Motor neuron (in vitro differentiated cells): ENCODE measurements at regions of chr9 and their contacts with region 1.

Region 1: DNA sequence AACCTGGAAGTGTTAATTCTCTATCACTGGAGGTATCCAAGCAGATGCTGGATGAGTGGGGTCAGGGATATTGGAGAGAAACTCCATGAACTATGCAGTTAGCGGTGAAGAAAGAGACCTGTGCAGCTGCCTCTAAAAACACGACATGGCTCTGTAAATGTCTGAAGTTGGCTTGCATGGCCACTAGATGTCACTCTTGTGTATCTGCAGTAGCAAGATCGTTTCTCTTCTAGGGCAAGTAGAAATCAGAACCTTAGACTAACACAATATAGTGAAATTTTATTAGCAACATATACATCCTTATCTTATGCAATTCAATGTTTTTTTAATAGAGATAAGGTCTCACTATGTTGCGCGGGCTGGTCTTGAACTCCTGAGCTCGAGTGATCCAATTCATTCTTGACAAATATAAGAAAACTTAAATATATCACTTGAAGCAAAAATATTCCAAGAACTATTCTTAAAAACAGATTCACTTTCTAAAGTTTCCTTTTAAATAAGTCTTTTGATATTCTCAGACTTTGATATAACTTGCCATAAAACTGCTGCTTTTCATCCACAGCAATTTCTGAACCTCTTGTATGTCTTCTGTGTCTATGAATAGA is 2.9 kb downstream of the OR2S2 start:
- ATAC-seq: peak; percentile 60 to 96 (median 82)
- H3K4me3 ChIP-seq: no peak overlapping the region
- H3K27ac ChIP-seq: no peak overlapping the region
- H3K4me1 ChIP-seq: no peaks in the 10 kb centered on the region

Region 2: GRCh38 chr9:36102742-36103495 is 147.9 kb after region 1 on chr9:
- in situ Hi-C with region 1: loop called in 1 of 9 experiments (anchors 25 kb)
- ATAC-seq: peak; percentile 69 to 99 (median 87)
- H3K4me3 ChIP-seq: no peak overlapping the region
- H3K27ac ChIP-seq: no peak overlapping the region
- H3K4me1 ChIP-seq: peaks cover 0 to 2% of the 10 kb centered on the region in 2 donors